Heart left ventricle (tissue), 16 donors: ENCODE measurements at regions of chr11 and their contacts with region 1.

Region 1: DNA sequence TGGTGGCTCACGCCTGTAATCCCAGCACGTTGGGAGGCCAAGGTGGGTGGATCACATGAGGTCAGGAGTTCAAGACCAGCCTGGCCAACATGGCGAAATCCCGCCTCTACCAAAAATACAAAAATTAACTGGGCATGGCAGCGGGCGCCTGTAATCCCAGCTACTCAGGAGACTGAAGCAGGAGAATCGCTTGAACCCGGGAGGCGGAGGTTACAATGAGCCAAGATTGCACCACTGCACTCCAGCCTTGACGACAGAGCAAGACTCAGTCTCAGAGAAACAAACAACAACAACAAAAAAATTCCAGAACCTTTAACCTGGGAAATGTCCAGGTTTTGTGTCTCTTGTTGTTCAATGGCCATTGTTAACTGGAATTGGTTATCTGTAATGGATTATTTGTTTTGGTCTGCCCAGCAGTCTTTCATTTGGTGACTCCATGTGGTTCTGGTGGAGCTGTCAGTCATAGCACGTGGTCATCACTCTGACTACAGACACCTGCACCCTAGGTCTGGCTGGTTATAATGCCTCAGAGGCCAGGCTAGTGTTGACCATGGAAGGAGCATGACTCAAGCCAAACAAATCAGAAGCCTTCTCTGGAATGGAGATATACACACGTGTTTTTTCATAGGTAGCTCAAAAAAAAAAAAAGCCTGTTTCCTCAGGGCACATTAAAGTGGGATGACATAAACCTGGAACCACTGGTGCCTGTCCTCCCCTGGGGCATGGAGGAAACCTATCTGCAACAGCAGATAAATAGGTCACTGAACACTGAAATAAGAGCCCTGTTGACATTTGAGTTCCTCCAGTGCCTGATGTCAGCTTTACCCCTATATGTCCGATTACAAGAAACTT is 7.9 kb upstream of the PLAAT3 start:
- DNase-seq: no peak
- ATAC-seq: no peak
- H3K4me3 ChIP-seq: no peak overlapping the region
- H3K27ac ChIP-seq: no peak overlapping the region
- H3K4me1 ChIP-seq: peaks cover 0 to 27% (median 0%) of the 10 kb centered on the region in 12 donors
- H3K27me3 ChIP-seq: no peaks in the 10 kb centered on the region
- CTCF ChIP-seq: no peak
- POLR2A ChIP-seq: no peak

Region 2: DNA sequence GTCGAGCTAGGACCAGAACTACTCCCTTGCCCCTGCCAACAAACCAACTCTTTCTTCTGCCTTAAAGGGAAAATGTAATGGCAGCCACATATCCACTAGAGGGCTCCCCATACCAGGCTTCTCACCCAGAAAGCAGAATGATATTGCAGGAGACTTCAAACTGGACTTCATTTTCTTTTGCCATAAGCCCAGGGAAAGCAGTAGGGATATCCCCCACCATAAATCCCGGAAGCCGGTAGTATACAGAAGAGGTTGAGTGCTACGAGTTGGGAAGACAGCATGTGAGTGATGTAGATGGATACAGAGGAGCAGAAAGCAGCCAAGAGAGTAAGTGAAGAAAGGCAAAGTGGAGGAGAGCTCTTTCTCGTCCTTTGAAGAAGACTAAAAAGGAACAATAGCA is 143.3 kb before region 1 on chr11:
- intact Hi-C with region 1: loop called in 1 of 10 experiments (anchors 5 kb)
- DNase-seq: peak in 2 of 5 donors; percentile 33 to 49
- ATAC-seq: peak; percentile 32 to 85 (median 82)
- H3K4me3 ChIP-seq: no peak overlapping the region
- H3K27ac ChIP-seq: no peak overlapping the region
- H3K4me1 ChIP-seq: no peaks in the 10 kb centered on the region
- H3K27me3 ChIP-seq: no peaks in the 10 kb centered on the region
- CTCF ChIP-seq: peak; percentile 82 to 96 (median 90)
- POLR2A ChIP-seq: no peak

Region 3: DNA sequence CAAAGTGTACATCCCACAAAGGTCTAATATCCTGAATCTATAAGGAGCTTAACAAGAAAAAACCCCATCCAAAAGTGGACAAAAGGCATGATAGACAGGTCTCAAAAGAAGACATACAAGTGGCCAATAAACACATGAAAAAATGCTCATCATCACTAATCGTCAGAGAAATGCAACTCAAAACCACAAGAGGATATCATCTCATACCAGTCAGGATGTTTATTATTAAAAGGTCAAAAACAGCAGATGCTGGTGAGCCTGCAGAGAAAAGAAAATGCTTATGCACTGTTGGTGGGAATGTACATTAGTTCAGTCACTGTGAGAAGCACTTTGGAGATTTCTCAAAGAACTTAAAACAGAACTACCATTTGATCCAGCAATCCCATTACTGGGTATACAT is 103.6 kb before region 1 on chr11:
- intact Hi-C with region 1: no loop called
- DNase-seq: no peak
- ATAC-seq: no peak
- H3K4me3 ChIP-seq: no peak overlapping the region
- H3K27ac ChIP-seq: no peak overlapping the region
- H3K4me1 ChIP-seq: no peaks in the 10 kb centered on the region
- H3K27me3 ChIP-seq: no peaks in the 10 kb centered on the region
- CTCF ChIP-seq: no peak
- POLR2A ChIP-seq: no peak